Panc1 (cell line): ENCODE measurements at regions of chr1 and their contacts with region 1.

Region 1: GRCh38 chr1:156821801-156822200 is 5.2 kb upstream of the SH2D2A start:
- DNase-seq: no peak
- ATAC-seq: no peak
- H3K4me3 ChIP-seq: no peak overlapping the region
- H3K27ac ChIP-seq: no peak overlapping the region
- H3K4me1 ChIP-seq: no peaks in the 10 kb centered on the region
- H3K27me3 ChIP-seq: peaks cover 10% of the 10 kb centered on the region
- CTCF ChIP-seq: no peak

Region 2: GRCh38 chr1:156781585-156782186 is 40.1 kb before region 1 on chr1:
- CTCF ChIA-PET with region 1: interaction called, 10 read pairs
- POLR2A ChIA-PET with region 1: no interaction called
- in situ Hi-C with region 1: no loop called
- intact Hi-C with region 1: no loop called
- DNase-seq: no peak
- ATAC-seq: no peak
- H3K4me3 ChIP-seq: no peak overlapping the region
- H3K27ac ChIP-seq: no peak overlapping the region
- H3K4me1 ChIP-seq: 0 out of 2 replicates have a peak, but pooled peaks cover 5% of the 10 kb centered on the region
- H3K27me3 ChIP-seq: no peaks in the 10 kb centered on the region
- CTCF ChIP-seq: no peak

Region 3: GRCh38 chr1:156838981-156839410 is 17.2 kb after region 1 on chr1:
- CTCF ChIA-PET with region 1: interaction called, 10 read pairs
- POLR2A ChIA-PET with region 1: no interaction called
- in situ Hi-C with region 1: no loop called
- intact Hi-C with region 1: no loop called
- DNase-seq: peak; percentile 27
- ATAC-seq: peak; percentile 79
- H3K4me3 ChIP-seq: no peak overlapping the region
- H3K27ac ChIP-seq: no peak overlapping the region
- H3K4me1 ChIP-seq: no peaks in the 10 kb centered on the region
- H3K27me3 ChIP-seq: peaks cover 2% of the 10 kb centered on the region
- CTCF ChIP-seq: peak; percentile 96